ENCODE measurements at regions of chr19 and their contacts with region 1.

Region 1: GRCh38 chr19:2061495-2062381 is 10.7 kb upstream of the MKNK2 start:
- DNase-seq: peak; percentile 99
- ATAC-seq: peak; percentile 84 to 94 (median 88)
- H3K4me3 ChIP-seq: peak overlapping the region; percentile 37 to 92 (median 64)
- H3K27ac ChIP-seq: peak overlapping the region; percentile 97 to 100 (median 100)
- H3K4me1 ChIP-seq: peaks cover 26 to 77% (median 53%) of the 10 kb centered on the region in 9 donors
- H3K27me3 ChIP-seq: no peaks in the 10 kb centered on the region
- CTCF ChIP-seq: peak in 3 of 9 donors; percentile 8 to 29 (median 23)

Region 2: GRCh38 chr19:1863726-1864480 is 197.8 kb before region 1 on chr19:
- intact Hi-C with region 1: loop called in 1 of 10 experiments (anchors 10 kb)
- DNase-seq: peak; percentile 90 to 91
- ATAC-seq: peak; percentile 82 to 87 (median 84)
- H3K4me3 ChIP-seq: peak overlapping the region; percentile 42 to 96 (median 82)
- H3K27ac ChIP-seq: peak overlapping the region; percentile 21 to 99 (median 94)
- H3K4me1 ChIP-seq: peaks cover 18 to 48% (median 36%) of the 10 kb centered on the region in 9 donors
- H3K27me3 ChIP-seq: no peaks in the 10 kb centered on the region
- CTCF ChIP-seq: no peak

Region 3: DNA sequence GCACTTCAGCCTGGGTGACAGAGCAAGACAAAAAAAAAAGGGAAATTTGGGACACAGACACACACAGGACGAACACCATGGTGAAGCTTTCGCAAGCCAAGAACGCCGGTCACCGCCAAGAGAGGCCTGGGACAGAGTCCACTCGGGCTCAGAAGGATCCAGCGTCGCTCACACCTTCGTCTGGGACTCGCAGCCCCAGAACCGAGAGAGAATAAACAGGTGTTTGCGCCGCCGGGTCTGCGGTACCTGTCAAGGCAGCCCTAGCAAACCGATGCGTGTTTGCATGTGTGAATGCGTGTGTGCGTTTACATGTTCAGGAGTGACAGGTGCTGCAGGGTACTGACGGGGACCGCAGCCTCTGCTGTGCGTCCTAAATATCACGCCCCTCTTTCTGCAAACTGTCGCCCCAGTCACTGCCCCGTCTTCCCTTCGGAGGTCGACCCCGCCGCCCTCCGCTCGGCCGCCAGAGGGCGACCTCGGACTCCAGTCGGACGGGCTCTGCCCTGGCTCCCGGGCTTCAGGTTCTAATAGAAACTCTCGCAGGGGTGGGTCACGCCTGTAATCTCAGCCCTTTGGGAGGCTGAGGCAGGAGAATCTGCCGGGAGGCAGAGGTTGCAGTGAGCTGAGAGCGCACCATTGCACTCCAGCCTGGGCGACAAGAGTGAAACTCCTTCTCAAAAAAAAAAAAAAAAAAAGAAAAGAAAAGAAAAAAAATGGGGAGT is 132.6 kb before region 1 on chr19:
- intact Hi-C with region 1: loop called in 5 of 10 experiments (anchors 5 to 10 kb)
- DNase-seq: peak; percentile 69 to 83
- ATAC-seq: peak; percentile 87 to 95 (median 94)
- H3K4me3 ChIP-seq: peak overlapping the region in 9 of 10 donors; percentile 12 to 56 (median 45)
- H3K27ac ChIP-seq: peak overlapping the region in 1 of 10 donors; percentile 24
- H3K4me1 ChIP-seq: peaks cover 5 to 14% (median 12%) of the 10 kb centered on the region in 9 donors
- H3K27me3 ChIP-seq: no peaks in the 10 kb centered on the region
- CTCF ChIP-seq: peak; percentile 88 to 94 (median 91)

Region 4: DNA sequence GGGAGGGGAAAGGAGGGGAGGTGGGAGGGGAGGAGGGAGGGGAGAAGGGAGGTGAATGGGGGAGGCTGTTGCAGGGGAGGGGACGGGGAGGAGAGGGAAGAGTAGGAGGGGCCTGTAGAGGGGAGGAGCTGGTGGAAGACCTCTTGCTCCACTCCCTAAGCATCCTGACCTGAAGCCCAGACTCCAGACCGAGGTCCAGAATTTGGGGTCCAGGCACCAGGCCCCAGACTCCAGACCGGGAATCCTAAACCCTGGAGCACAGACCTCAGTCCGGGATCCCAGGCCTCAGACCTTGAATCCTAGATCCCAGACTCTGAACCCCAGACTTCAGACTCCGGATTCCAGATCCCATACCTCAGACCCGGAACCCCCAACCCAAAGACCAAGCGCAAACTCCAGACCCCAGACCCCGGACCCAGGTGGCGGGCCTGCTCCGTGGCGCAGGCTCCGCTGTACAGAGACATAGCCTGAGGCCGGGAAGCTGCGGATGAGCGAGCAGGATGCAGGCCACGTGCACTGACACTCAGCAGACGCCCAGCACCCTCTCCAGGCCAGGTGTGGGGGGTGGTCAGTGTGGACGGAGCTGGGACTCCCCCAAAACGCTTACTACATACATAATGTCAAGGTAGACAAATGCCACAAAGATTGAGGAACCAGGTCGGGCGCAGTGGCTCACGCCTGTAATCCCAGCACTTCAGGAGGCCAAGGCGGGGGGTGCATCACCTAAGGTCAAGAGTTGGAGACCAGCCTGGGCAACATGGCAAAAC is 45.5 kb before region 1 on chr19:
- intact Hi-C with region 1: loop called in 2 of 10 experiments (anchors 5 kb)
- DNase-seq: peak; percentile 66 to 85
- ATAC-seq: peak; percentile 68 to 91 (median 86)
- H3K4me3 ChIP-seq: peak overlapping the region in 8 of 10 donors; percentile 4 to 49 (median 42)
- H3K27ac ChIP-seq: peak overlapping the region in 8 of 10 donors; percentile 4 to 68 (median 50)
- H3K4me1 ChIP-seq: peaks cover 4 to 24% (median 9%) of the 10 kb centered on the region in 9 donors
- H3K27me3 ChIP-seq: no peaks in the 10 kb centered on the region
- CTCF ChIP-seq: no peak

Region 5: DNA sequence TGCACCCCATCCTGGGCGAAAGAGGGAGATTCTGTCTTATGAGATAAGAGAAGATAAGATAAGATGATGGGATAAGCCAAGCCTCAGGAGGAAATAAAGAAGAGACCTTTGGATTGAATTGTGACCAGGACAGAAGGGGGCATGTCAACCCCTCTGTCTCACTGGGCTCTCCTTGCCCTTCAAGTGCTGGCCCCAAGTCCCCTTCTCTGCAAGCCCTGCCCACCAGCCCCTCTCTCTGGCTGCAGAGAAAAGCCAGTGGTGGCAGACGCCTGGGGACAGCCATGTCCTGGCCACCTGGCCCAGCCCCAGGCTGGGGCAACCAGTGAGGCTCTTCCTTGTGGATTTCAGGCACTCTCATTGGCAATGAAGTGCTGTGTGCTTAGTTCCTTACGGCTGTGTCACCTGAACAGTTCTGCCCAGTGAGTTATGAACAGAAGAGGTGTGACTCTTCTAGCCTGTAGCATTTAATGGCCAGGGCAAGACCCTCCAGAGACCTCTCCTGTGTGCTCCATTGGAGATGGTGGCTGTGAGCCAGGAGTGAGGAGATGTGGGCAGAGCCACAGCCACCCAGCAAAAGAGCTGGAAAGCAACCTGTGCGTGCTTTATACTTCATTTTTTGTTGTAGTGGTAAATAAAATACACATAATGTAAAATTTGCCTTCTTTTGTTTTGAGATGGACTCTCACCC is 40.1 kb before region 1 on chr19:
- intact Hi-C with region 1: loop called in 2 of 10 experiments (anchors 5 kb)
- DNase-seq: no peak
- ATAC-seq: no peak
- H3K4me3 ChIP-seq: no peak overlapping the region
- H3K27ac ChIP-seq: no peak overlapping the region
- H3K4me1 ChIP-seq: peaks cover 0 to 9% (median 0%) of the 10 kb centered on the region in 9 donors
- H3K27me3 ChIP-seq: no peaks in the 10 kb centered on the region
- CTCF ChIP-seq: no peak

Region 6: GRCh38 chr19:2032296-2032941 is 29.3 kb before region 1 on chr19:
- intact Hi-C with region 1: no loop called
- DNase-seq: peak; percentile 92 to 94
- ATAC-seq: peak; percentile 90 to 96 (median 94)
- H3K4me3 ChIP-seq: peak overlapping the region in 5 of 10 donors; percentile 2 to 24 (median 15)
- H3K27ac ChIP-seq: peak overlapping the region; percentile 87 to 97 (median 96)
- H3K4me1 ChIP-seq: peaks cover 12 to 53% (median 23%) of the 10 kb centered on the region in 9 donors
- H3K27me3 ChIP-seq: no peaks in the 10 kb centered on the region
- CTCF ChIP-seq: no peak

Region 7: DNA sequence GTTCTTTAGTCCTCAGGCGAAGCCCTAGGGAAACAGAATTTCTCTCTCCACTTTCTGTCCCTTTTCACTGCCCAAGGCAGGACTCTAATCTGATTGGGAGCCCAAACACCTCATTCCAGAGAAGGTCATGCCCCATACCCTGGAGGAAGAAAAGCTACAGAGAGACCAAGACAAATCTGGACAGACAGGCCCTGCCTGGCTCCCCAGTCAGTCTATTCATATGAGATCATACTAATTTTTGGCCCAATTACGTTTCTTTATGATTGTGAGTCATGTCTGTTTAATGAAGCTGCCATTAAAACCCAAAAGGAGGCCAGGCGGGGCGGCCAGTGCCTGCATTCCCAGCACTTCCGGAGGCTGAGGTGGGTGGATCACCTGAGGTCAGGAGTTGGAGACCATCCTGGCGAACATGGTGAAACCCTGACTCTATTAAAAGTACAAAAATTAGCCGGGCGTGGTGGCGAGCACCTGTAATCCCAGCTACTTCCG is 92.9 kb after region 1 on chr19:
- intact Hi-C with region 1: no loop called
- DNase-seq: no peak
- ATAC-seq: no peak
- H3K4me3 ChIP-seq: no peak overlapping the region
- H3K27ac ChIP-seq: peak overlapping the region in 1 of 10 donors; percentile 31
- H3K4me1 ChIP-seq: peaks cover 6 to 27% (median 14%) of the 10 kb centered on the region in 9 donors
- H3K27me3 ChIP-seq: no peaks in the 10 kb centered on the region
- CTCF ChIP-seq: no peak